Aorta (tissue), 5 donors: ENCODE measurements at regions of chr17 and their contacts with region 1.

Region 1: GRCh38 chr17:78397681-78398101 is 19.2 kb downstream of the PGS1 start:
- DNase-seq: peak; percentile 77 to 86
- ATAC-seq: peak; percentile 82
- H3K4me3 ChIP-seq: no peak overlapping the region
- H3K27ac ChIP-seq: peak overlapping the region in 1 of 2 donors; percentile 96
- H3K4me1 ChIP-seq: peaks cover 2 to 4% of the 10 kb centered on the region in 2 donors
- H3K27me3 ChIP-seq: no peaks in the 10 kb centered on the region

Region 2: GRCh38 chr17:78313735-78314648 is 83.7 kb before region 1 on chr17:
- intact Hi-C with region 1: loop called in 1 of 2 experiments (anchors 1 kb)
- DNase-seq: peak; percentile 83 to 92
- ATAC-seq: peak; percentile 78
- H3K4me3 ChIP-seq: peak overlapping the region; percentile 42 to 59
- H3K27ac ChIP-seq: peak overlapping the region in 1 of 2 donors; percentile 29
- H3K4me1 ChIP-seq: no peaks in the 10 kb centered on the region
- H3K27me3 ChIP-seq: no peaks in the 10 kb centered on the region